HepG2 (cell line): ENCODE measurements at regions of chr10 and their contacts with region 1.

Region 1: DNA sequence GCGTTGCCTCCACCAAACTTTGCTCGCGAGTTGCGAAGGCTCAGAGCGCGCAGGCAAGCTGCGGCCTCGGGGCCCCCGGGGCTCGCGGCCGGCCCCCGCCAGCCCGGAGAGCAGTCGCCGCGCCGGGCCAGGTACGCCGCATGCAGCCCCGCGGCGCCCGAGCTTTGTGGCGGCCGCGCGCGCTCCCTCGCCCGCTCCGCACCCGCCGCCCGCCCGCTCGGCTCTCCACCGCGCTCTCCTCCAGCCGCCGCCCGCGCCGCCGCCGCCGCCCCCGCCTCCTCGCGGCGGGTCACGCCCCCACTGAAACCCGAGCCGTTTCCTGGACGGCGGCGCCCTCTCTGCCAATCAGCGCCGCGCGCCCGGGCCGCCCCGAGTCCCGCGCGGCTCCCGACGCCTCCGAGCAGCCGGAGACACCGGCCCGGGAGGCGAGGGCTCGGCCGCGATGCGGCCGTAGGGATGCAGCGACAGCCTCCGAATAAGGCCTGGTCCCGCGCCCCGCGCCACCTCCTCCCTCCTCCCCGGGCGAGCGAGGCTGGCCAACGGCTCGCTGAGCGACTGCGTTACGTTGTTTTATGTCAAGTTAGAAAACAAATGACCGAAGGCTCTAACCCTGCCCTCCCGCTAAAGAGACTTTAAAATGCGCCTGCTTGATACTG is at the start of gene FGFR2:
- DNase-seq: peak; percentile 46
- ATAC-seq: peak; percentile 93
- H3K4me3 ChIP-seq: peak within 1 kb of the TSS; percentile 54 to 71 (median 55)
- H3K27ac ChIP-seq: no peak within 1 kb of the TSS
- H3K4me1 ChIP-seq: peaks cover 27% of the 10 kb centered on the region
- H3K27me3 ChIP-seq: peaks cover 5 to 45% of the 10 kb centered on the region in 2 experiments; a peak in 4 of 5 replicates
- CTCF ChIP-seq: peak; percentile 0; the same call in 1 of the 2 replicates
- EP300 ChIP-seq: no peak
- POLR2A ChIP-seq: no peak
- RAD21 ChIP-seq: no peak
- total RNA-seq, gene FGFR2: 1.4 and 2.6 TPM in 2 replicates

Region 2: DNA sequence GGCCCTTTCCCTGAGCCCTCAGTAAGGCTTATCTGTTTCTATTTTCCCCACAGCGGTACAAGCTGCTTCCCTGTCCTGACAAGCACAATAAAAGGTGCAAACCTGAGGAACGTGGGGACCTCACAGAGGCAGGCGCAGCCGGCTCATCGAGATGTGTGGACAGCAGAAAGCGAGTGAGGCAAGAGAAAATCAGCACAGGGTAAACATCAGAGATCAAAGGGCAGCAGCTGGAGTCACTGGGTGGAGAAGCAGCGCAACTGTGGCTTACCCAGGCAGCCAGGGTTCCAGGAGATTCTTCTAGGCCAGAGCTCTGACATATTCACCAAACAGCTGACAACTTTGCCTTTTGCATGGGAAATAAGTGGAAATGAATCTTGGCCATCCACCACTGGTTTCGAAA is 534.6 kb before region 1 on chr10:
- CTCF ChIA-PET with region 1: no interaction called
- POLR2A ChIA-PET with region 1: no interaction called
- in situ Hi-C with region 1: no loop called
- intact Hi-C with region 1: loop called (anchors 5 kb)
- DNase-seq: peak; percentile 88
- ATAC-seq: peak; percentile 100
- H3K4me3 ChIP-seq: no peak overlapping the region; a peak in 1 of 6 replicates
- H3K27ac ChIP-seq: no peak overlapping the region
- H3K4me1 ChIP-seq: peaks cover 35% of the 10 kb centered on the region
- H3K27me3 ChIP-seq: no peaks in the 10 kb centered on the region
- CTCF ChIP-seq: no peak
- EP300 ChIP-seq: peak in 1 of 2 experiments; percentile 72; a peak in 1 of 4 replicates
- POLR2A ChIP-seq: no peak
- RAD21 ChIP-seq: no peak

Region 3: GRCh38 chr10:121522831-121523230 is 75.5 kb before region 1 on chr10:
- CTCF ChIA-PET with region 1: no interaction called
- POLR2A ChIA-PET with region 1: no interaction called
- in situ Hi-C with region 1: no loop called
- intact Hi-C with region 1: loop called (anchors 2 kb)
- DNase-seq: no peak
- ATAC-seq: no peak
- H3K4me3 ChIP-seq: peak overlapping the region in 1 of 3 experiments; percentile 56; a peak in 2 of 6 replicates
- H3K27ac ChIP-seq: peak overlapping the region; percentile 83
- H3K4me1 ChIP-seq: peaks cover 58% of the 10 kb centered on the region
- H3K27me3 ChIP-seq: no peaks in the 10 kb centered on the region
- CTCF ChIP-seq: no peak
- EP300 ChIP-seq: no peak
- POLR2A ChIP-seq: no peak
- RAD21 ChIP-seq: no peak

Region 4: GRCh38 chr10:121531076-121531829 is 67.1 kb before region 1 on chr10:
- CTCF ChIA-PET with region 1: no interaction called
- POLR2A ChIA-PET with region 1: no interaction called
- in situ Hi-C with region 1: no loop called
- intact Hi-C with region 1: loop called (anchors 2 kb)
- DNase-seq: peak; percentile 84
- ATAC-seq: peak; percentile 87
- H3K4me3 ChIP-seq: peak overlapping the region; percentile 29 to 58 (median 44)
- H3K27ac ChIP-seq: peak overlapping the region; percentile 78
- H3K4me1 ChIP-seq: peaks cover 73% of the 10 kb centered on the region
- H3K27me3 ChIP-seq: no peaks in the 10 kb centered on the region
- CTCF ChIP-seq: no peak
- EP300 ChIP-seq: peak in 1 of 2 experiments; percentile 86; a peak in 2 of 4 replicates
- POLR2A ChIP-seq: 0 out of 4 replicates have a peak, but pooled peaks of 1 of the 2 experiments have one; percentile 22
- RAD21 ChIP-seq: no peak

Region 5: DNA sequence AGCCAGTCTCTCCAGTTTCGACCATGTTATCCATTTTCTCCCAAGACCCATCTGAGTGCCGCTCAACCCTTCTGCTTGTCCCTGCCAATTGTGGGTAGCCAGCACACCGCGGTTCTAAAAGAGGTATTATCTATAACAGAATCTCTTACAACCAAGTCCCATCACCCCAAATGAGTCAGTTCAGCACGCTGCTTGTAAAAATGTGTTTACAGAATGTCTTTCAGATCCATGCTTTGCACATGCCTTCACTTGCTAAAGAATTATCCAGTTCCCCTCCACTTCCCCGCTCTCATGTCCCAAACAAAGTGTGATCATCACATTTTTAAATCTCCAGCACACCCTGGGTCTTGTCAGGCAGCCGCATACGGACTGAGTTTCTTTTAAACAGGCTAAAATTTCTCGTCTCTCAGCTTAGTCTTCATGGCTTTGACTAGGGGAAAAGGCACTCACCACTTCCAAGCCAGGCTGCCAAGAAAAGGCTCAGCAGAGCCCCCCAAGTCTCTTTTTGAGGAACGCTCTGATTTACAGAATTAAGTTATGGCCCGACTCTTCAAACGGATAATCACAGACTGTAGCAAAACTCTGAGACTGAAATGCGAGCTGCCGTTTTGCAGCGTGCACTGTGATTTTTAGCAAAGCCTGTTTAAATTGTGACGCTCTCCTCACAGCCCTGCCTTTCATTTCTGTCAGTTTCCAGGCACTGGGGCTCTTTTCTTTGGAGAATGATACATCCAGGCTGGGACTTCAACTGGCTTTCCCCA is 29.7 kb after region 1 on chr10:
- CTCF ChIA-PET with region 1: no interaction called
- POLR2A ChIA-PET with region 1: no interaction called
- in situ Hi-C with region 1: no loop called
- intact Hi-C with region 1: no loop called
- DNase-seq: no peak
- ATAC-seq: no peak
- H3K4me3 ChIP-seq: no peak overlapping the region
- H3K27ac ChIP-seq: no peak overlapping the region
- H3K4me1 ChIP-seq: peaks cover 8% of the 10 kb centered on the region
- H3K27me3 ChIP-seq: peaks cover 0 to 18% of the 10 kb centered on the region in 2 experiments; a peak in 3 of 5 replicates
- CTCF ChIP-seq: no peak
- EP300 ChIP-seq: no peak
- POLR2A ChIP-seq: no peak
- RAD21 ChIP-seq: no peak

Region 6: GRCh38 chr10:121823993-121824463 is 225.7 kb after region 1 on chr10:
- CTCF ChIA-PET with region 1: no interaction called
- POLR2A ChIA-PET with region 1: no interaction called
- in situ Hi-C with region 1: no loop called
- intact Hi-C with region 1: no loop called
- DNase-seq: peak; percentile 44
- ATAC-seq: peak; percentile 68; the same call in 2 of the 3 replicates
- H3K4me3 ChIP-seq: no peak overlapping the region
- H3K27ac ChIP-seq: no peak overlapping the region
- H3K4me1 ChIP-seq: no peaks in the 10 kb centered on the region
- H3K27me3 ChIP-seq: no peaks in the 10 kb centered on the region
- CTCF ChIP-seq: peak; percentile 56
- EP300 ChIP-seq: no peak
- POLR2A ChIP-seq: no peak
- RAD21 ChIP-seq: no peak; the same call in 1 of the 2 replicates